PC-9 (cell line): ENCODE measurements at regions of chr1 and their contacts with region 1.

Region 1: GRCh38 chr1:32179443-32180185 is at the start of gene TXLNA:
- DNase-seq: peak; percentile 86 to 91
- H3K4me3 ChIP-seq: peak within 1 kb of the TSS; percentile 93
- H3K27ac ChIP-seq: peak within 1 kb of the TSS; percentile 69
- H3K4me1 ChIP-seq: peaks cover 29% of the 10 kb centered on the region
- H3K27me3 ChIP-seq: no peaks in the 10 kb centered on the region
- CTCF ChIP-seq: no peak
- total RNA-seq, gene TXLNA: 32.0 and 45.8 TPM in 2 replicates

Region 2: DNA sequence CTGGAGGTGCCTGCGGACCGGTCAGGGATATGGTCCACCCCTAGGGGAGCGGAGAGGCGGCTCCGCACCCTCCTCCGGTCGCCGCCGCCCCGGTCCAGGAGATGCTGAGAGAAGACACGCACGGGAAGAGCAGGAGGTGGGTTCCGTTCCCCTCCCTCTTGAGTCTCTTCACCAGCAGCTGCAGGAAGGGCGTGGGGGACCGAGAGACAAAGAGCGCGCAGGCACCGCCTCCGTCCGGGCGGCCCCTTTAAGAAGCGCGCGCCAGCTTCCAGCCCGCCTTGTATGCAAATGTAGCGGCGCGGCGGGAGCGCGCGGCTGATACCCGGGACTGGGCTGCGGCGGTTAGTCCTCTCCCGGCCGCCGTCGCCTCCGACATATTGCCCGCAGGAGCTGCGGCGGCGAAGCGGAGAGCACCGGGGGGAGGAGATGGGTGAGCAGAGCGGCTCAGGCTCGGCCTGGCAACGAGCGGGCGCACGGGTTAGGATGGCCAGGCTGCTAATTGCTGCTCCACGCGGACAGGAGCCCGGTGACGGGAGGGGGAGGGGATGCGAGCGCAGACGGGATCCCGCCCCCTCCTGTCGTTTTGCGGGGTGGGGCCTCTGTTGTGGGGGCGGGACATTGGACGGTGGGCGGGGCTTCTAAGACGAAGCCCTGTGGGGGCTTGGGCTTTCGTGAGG is 106.9 kb before region 1 on chr1 and contains the start of gene TMEM39B:
- CTCF ChIA-PET with region 1: interaction called, 10 read pairs
- POLR2A ChIA-PET with region 1: interaction called, 8 read pairs
- intact Hi-C with region 1: loop called (anchors 10 kb)
- DNase-seq: peak; percentile 81 to 90
- H3K4me3 ChIP-seq: peak within 1 kb of the TSS; percentile 67
- H3K27ac ChIP-seq: peak within 1 kb of the TSS; percentile 25; the same call in 1 of the 2 replicates
- H3K4me1 ChIP-seq: peaks cover 16% of the 10 kb centered on the region
- H3K27me3 ChIP-seq: no peaks in the 10 kb centered on the region
- CTCF ChIP-seq: no peak
- total RNA-seq, gene TMEM39B: 26.0 and 27.2 TPM in 2 replicates

Region 3: DNA sequence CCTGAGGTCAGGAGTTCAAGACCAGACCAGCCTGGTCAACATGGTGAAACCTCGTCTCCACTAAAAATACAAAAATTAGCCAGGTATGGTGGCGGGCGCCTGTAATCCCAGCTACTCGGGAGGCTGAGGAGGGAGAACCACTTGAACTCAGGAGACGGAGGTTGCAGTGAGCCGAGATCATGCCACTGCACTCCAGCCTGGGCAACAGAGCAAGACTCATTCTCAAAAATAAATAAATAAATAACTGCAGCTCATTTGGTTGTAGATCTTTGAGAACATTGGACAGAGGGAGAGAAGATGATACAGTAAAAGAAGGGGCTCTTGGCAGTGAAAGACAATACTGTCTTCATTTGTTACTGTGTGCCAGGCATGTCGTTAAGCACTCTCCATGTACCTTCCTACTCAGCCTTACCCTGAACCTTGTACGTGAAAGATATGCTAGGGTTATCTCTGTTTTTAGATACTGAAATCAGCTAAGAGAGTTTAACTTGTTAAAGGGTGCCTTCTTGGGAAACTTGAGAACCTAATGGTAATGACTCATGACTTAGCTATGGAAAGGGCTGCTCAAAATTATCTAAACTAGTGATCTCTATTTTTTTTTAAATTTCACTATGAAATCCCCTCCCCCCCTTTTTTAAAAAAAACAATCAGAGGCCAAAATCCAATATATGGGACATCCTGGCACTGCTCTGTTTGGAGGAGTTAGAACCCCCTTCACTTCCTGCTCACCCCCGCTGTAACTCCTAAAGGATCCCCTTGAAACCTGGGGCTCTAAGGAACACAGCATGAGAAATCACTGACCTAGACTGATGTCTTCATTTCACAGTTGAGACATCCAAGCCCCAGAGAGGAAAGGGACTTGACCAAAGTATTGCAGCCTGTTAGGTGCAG is 78.6 kb before region 1 on chr1:
- CTCF ChIA-PET with region 1: no interaction called
- POLR2A ChIA-PET with region 1: no interaction called
- intact Hi-C with region 1: no loop called
- DNase-seq: peak in 1 of 2 experiments; percentile 78
- H3K4me3 ChIP-seq: no peak overlapping the region; the same call in 1 of the 2 replicates
- H3K27ac ChIP-seq: peak overlapping the region; percentile 56
- H3K4me1 ChIP-seq: peaks cover 24% of the 10 kb centered on the region
- H3K27me3 ChIP-seq: no peaks in the 10 kb centered on the region
- CTCF ChIP-seq: no peak

Region 4: GRCh38 chr1:32199717-32200072 is 20.1 kb after region 1 on chr1:
- CTCF ChIA-PET with region 1: no interaction called
- POLR2A ChIA-PET with region 1: interaction called, 11 read pairs
- intact Hi-C with region 1: no loop called
- DNase-seq: no peak
- H3K4me3 ChIP-seq: no peak overlapping the region
- H3K27ac ChIP-seq: no peak overlapping the region
- H3K4me1 ChIP-seq: 0 out of 2 replicates have a peak, but pooled peaks cover under 1% of the 10 kb centered on the region
- H3K27me3 ChIP-seq: no peaks in the 10 kb centered on the region
- CTCF ChIP-seq: no peak